ENCODE measurements at regions of chr12 and their contacts with region 1.

Region 1: GRCh38 chr12:90280564-90281058 is 572.0 kb upstream of the ATP2B1 start:
- DNase-seq: peak; percentile 43
- H3K4me3 Mint-ChIP-seq: no peak overlapping the region
- H3K27ac Mint-ChIP-seq: peak overlapping the region; percentile 56
- H3K4me1 Mint-ChIP-seq: peaks cover 17% of the 10 kb centered on the region
- H3K27me3 Mint-ChIP-seq: peaks cover 9% of the 10 kb centered on the region

Region 2: GRCh38 chr12:89597770-89598169 is 682.8 kb before region 1 on chr12:
- CTCF ChIA-PET with region 1: no interaction called
- intact Hi-C with region 1: loop called (anchors 2 kb)
- DNase-seq: no peak
- H3K4me3 Mint-ChIP-seq: no peak overlapping the region
- H3K27ac Mint-ChIP-seq: peak overlapping the region; percentile 66
- H3K4me1 Mint-ChIP-seq: peaks cover 23% of the 10 kb centered on the region
- H3K27me3 Mint-ChIP-seq: no peaks in the 10 kb centered on the region

Region 3: GRCh38 chr12:89663577-89664357 is 616.8 kb before region 1 on chr12:
- CTCF ChIA-PET with region 1: no interaction called
- intact Hi-C with region 1: loop called (anchors 5 kb)
- DNase-seq: peak; percentile 38
- H3K4me3 Mint-ChIP-seq: peak overlapping the region; percentile 16
- H3K27ac Mint-ChIP-seq: peak overlapping the region; percentile 55
- H3K4me1 Mint-ChIP-seq: peaks cover 65% of the 10 kb centered on the region
- H3K27me3 Mint-ChIP-seq: no peaks in the 10 kb centered on the region

Region 4: GRCh38 chr12:89856431-89856830 is 424.2 kb before region 1 on chr12:
- CTCF ChIA-PET with region 1: no interaction called
- intact Hi-C with region 1: loop called (anchors 2 kb)
- DNase-seq: no peak
- H3K4me3 Mint-ChIP-seq: no peak overlapping the region
- H3K27ac Mint-ChIP-seq: no peak overlapping the region
- H3K4me1 Mint-ChIP-seq: peaks cover 42% of the 10 kb centered on the region
- H3K27me3 Mint-ChIP-seq: no peaks in the 10 kb centered on the region

Region 5: DNA sequence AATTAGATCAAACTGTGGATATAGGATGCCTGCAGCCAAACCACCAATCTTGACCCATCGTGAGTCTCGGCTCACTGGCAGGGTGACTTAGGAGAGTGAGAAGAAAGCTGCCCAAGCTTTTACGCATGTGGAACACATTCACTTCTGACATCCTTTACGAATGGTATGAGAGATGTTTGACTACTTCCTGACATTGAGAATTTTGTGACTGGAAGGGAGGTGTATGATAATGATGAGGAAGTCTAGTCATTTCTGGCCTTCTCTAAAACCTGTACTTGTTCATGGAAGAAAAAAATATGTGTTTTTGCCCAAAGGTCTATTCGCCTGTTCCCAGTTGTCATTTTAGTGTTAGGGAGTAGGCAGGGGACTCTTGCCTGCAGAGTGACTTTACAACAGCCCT is 344.8 kb before region 1 on chr12:
- CTCF ChIA-PET with region 1: no interaction called
- intact Hi-C with region 1: loop called (anchors 2 kb)
- DNase-seq: no peak
- H3K4me3 Mint-ChIP-seq: no peak overlapping the region
- H3K27ac Mint-ChIP-seq: peak overlapping the region; percentile 53
- H3K4me1 Mint-ChIP-seq: peaks cover 28% of the 10 kb centered on the region
- H3K27me3 Mint-ChIP-seq: no peaks in the 10 kb centered on the region

Region 6: DNA sequence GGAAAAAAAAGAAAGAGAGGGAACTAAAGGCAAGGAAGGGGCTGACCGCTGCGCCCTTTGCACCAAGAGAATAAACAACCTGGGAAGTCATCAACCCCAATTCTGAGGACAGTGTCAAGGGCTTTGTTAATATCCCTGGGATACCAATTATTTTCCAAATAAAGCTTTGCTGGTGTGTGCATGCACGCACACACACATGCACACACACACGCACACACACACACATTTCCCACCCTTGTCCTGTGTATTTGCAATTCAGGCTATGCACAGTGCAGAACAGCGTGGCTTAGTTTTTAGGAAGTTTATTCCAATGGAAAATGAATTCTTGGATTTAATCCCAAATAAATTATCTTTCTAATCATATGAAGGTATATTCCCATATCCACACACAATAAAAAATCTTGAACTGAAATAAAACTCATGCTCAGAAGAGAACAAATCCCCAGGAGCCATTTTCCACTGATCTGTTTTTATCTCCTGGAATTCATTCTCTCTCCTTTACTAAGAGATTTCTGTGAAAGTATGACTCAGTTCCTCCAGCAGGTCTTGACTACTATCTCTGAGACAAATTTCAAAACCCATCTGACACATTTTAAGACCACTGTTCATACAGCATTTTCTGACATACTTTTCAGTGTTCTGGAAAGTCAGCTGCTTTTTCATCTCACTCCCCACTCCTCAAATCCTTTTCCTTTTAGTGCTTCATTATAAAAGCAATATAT is 237.5 kb before region 1 on chr12:
- CTCF ChIA-PET with region 1: no interaction called
- intact Hi-C with region 1: loop called (anchors 5 kb)
- DNase-seq: no peak
- H3K4me3 Mint-ChIP-seq: no peak overlapping the region
- H3K27ac Mint-ChIP-seq: no peak overlapping the region
- H3K4me1 Mint-ChIP-seq: peaks cover 9% of the 10 kb centered on the region
- H3K27me3 Mint-ChIP-seq: no peaks in the 10 kb centered on the region

Region 7: DNA sequence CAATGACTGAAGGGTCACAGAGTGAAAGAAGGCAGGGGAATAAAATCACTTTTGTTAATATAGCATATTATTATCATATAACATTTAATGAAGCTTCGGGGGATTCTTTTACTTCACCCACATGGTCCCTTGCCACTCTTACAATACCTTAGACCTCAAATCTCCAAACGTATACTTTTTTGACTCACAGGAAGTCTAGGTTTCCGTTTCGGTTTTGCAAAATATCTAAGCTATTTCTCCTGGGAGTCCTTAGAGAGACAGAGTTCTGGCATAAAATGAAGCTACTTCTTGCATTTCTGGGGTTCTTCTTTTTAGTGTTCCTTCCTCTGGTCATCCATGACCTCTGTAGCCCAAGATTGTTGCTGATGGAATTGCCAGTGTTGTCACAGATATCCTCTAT is 18.5 kb after region 1 on chr12:
- CTCF ChIA-PET with region 1: no interaction called
- intact Hi-C with region 1: loop called (anchors 1 kb)
- DNase-seq: no peak
- H3K4me3 Mint-ChIP-seq: no peak overlapping the region
- H3K27ac Mint-ChIP-seq: no peak overlapping the region
- H3K4me1 Mint-ChIP-seq: peaks cover 13% of the 10 kb centered on the region
- H3K27me3 Mint-ChIP-seq: peaks cover 12% of the 10 kb centered on the region